ENCODE measurements at regions of chr11 and their contacts with region 1.

Region 1: DNA sequence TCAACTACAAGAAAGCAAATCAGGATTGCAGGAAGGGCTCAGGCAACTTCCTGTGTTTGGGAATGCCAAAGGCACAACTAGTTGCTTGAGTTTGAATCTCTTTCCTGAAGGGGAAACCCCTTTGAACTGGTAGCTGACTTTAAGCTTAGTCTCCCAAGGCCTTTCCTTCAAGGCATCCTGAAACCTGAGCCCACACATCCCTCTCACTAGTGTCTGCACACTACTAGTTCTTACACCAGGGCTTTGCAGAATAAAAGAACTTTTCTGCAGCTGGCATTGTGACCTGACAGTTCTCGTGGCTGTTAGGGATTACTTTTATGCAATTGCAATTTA is 95.4 kb downstream of the EXT2 start:
- DNase-seq: no peak
- H3K4me3 Mint-ChIP-seq: no peak overlapping the region
- H3K27ac Mint-ChIP-seq: no peak overlapping the region
- H3K4me1 Mint-ChIP-seq: peaks cover 30% of the 10 kb centered on the region
- H3K27me3 Mint-ChIP-seq: no peaks in the 10 kb centered on the region

Region 2: DNA sequence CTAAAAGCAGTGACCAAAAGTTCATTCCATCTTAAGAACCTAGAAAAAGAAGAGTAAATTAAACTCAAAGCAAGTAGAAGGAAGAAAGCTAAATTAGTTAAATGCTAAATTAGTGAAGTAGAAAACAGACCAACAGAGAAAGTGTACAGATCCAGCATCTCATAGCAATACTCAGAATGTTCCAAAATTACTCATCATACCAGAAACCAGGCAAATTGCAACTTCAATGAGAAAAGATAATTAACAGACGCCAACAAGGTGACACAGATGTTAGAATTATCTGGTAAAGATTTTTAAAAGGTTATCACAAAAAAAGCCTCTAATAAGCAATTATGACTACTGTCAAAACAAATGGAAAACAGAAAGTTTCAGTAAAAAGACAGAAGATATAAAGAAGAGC is 22.3 kb after region 1 on chr11:
- intact Hi-C with region 1: loop called (anchors 2 kb)
- DNase-seq: no peak
- H3K4me3 Mint-ChIP-seq: no peak overlapping the region
- H3K27ac Mint-ChIP-seq: no peak overlapping the region
- H3K4me1 Mint-ChIP-seq: peaks cover 11% of the 10 kb centered on the region
- H3K27me3 Mint-ChIP-seq: no peaks in the 10 kb centered on the region

Region 3: DNA sequence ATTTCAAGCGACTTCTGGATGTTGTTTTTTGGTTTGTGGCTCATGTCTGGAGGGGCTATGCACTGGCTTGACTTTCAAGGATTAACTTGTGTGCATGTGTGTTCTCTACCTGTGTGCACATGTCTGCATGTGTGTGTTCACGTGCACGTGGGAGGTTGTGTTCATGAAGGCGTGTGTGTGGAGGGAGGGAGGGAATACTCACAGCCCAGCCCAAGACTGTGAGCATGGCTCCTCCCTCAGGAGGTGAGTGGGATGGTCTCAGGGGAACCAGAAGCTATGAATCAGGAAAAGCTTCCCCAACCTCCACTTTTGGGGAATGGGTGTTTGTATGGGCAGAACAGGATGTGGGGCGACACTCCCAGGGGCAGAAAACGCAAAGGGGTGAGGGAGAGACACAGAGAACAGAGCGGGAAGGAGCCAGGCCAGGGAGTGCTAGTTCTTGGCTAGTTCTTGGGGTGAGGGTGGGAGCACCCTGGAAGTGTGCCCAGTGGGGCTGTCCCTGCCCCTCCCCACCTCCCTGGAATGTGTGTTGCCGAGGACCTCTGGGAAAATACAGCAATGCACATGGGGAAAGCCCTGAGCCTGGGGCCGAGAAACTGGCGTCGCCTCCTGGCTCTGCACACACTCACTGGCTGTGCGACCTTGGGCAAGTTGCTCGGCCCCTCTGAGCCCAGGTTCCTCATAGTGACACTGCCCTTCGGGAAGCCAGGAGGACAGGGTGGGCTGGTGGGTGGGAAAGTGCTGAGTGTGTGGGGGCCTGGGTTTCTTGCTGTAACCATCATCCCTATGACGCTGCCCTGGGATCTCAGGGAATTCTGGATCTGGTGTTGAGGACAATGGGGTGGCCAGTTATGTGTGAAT is 136.0 kb after region 1 on chr11:
- intact Hi-C with region 1: no loop called
- DNase-seq: no peak
- H3K4me3 Mint-ChIP-seq: no peak overlapping the region
- H3K27ac Mint-ChIP-seq: no peak overlapping the region
- H3K4me1 Mint-ChIP-seq: no peaks in the 10 kb centered on the region
- H3K27me3 Mint-ChIP-seq: peaks cover 66% of the 10 kb centered on the region

Region 4: DNA sequence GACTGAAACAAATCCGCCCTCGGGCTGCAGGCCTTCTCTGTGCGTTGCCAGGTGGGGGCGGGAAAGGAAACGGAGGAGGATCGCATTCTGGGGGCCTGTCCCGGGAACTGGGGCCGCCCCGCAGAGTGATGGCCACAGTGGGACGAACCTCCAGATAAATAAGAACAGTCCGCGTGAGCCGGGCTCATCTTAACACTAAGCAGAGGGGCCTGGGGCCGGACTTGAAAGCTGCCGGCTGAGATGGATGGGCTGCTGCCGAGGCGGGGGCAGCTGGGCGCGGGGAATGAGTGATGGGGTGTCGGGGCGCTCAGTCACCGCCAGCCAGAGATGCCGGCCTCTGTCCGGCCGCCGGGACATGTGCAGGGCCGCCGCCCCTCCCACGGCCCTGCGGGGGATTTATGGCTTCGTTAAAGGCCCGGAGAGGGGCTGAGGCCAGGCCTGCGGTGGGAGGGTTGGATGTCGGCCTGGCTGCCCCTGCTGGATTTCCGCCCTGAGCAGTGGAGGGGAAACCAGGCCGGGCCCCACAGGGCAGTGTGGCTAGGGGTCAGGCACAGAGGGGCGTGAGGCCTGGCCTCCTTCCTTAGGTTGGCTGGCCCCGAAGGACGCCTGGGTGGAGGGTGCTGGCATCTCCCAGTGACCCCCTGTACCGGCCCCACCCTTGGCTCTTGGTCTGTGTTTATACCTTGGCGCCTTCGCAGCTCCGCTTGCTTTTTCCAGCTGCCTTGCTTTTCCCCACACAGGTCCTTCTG is 329.3 kb after region 1 on chr11:
- intact Hi-C with region 1: loop called (anchors 10 kb)
- DNase-seq: no peak
- H3K4me3 Mint-ChIP-seq: no peak overlapping the region
- H3K27ac Mint-ChIP-seq: no peak overlapping the region
- H3K4me1 Mint-ChIP-seq: peaks cover 6% of the 10 kb centered on the region
- H3K27me3 Mint-ChIP-seq: peaks cover 42% of the 10 kb centered on the region

Region 5: GRCh38 chr11:44565211-44565952 is 374.5 kb after region 1 on chr11 and contains the start of gene CD82:
- intact Hi-C with region 1: no loop called
- DNase-seq: peak; percentile 98
- H3K4me3 Mint-ChIP-seq: peak within 1 kb of the TSS; percentile 86
- H3K27ac Mint-ChIP-seq: peak within 1 kb of the TSS; percentile 71
- H3K4me1 Mint-ChIP-seq: peaks cover 52% of the 10 kb centered on the region
- H3K27me3 Mint-ChIP-seq: no peaks in the 10 kb centered on the region
- total RNA-seq, gene CD82: 397 and 425 TPM in 2 replicates